Breast epithelium (tissue), 4 donors: ENCODE measurements at regions of chr15 and their contacts with region 1.

Region 1: GRCh38 chr15:88704791-88705768 is 66.3 kb downstream of the ISG20 start:
- DNase-seq: no peak
- H3K4me3 ChIP-seq: peak overlapping the region; percentile 47 to 68 (median 50)
- H3K27ac ChIP-seq: no peak overlapping the region
- H3K4me1 ChIP-seq: no peaks in the 10 kb centered on the region
- H3K27me3 ChIP-seq: peaks cover 0 to 20% of the 10 kb centered on the region in 2 donors
- CTCF ChIP-seq: no peak
- POLR2A ChIP-seq: no peak

Region 2: GRCh38 chr15:89472785-89473256 is 767.7 kb after region 1 on chr15:
- intact Hi-C with region 1: loop called (anchors 5 kb)
- DNase-seq: no peak
- H3K4me3 ChIP-seq: no peak overlapping the region
- H3K27ac ChIP-seq: no peak overlapping the region
- H3K4me1 ChIP-seq: no peaks in the 10 kb centered on the region
- H3K27me3 ChIP-seq: peaks cover 0 to 55% of the 10 kb centered on the region in 2 donors
- CTCF ChIP-seq: peak; percentile 11 to 39 (median 28)
- POLR2A ChIP-seq: no peak